AG04449 (cell line): ENCODE measurements at regions of chr4 and their contacts with region 1.

Region 1: DNA sequence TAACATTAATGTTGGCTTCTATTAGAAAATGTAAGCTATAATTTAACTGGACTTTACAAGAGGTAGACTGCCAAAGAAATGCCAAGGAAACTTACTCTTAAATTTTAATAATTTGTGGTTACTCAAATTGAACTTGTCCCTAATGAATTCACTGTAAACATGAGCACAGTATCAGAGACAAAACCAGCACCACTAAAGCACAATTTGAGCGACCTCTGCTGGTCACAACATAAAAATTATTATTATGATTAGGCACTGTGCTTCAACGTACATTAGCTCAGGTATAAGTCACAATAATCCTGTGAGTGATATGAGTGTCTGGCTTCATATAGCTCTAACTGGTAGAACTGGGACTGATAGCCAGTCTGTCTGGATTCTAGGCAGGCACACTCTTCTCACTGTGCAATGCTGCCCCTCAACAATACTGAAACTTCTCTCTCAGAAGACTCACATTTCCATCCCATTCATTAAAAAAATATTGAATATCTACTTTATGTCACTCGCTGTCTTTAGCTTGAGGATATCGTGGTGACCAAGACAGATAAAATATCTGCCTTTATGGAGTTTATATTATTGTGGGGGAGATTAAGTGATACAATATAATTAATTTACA is 8.0 kb downstream of the NUDT6 start:
- DNase-seq: no peak
- H3K4me3 ChIP-seq: no peak overlapping the region
- CTCF ChIP-seq: peak; percentile 26

Region 2: GRCh38 chr4:122602277-122603142 is 311.9 kb before region 1 on chr4:
- CTCF ChIA-PET with region 1: interaction called, 42 read pairs
- POLR2A ChIA-PET with region 1: no interaction called
- DNase-seq: no peak
- H3K4me3 ChIP-seq: no peak overlapping the region
- CTCF ChIP-seq: peak; percentile 20

Region 3: GRCh38 chr4:122732329-122733026 is 181.9 kb before region 1 on chr4 and contains the start of gene BBS12:
- CTCF ChIA-PET with region 1: interaction called, 43 read pairs
- POLR2A ChIA-PET with region 1: no interaction called
- DNase-seq: peak; percentile 95
- H3K4me3 ChIP-seq: peak within 1 kb of the TSS; percentile 82
- CTCF ChIP-seq: peak; percentile 74

Region 4: GRCh38 chr4:122758033-122758432 is 156.4 kb before region 1 on chr4:
- CTCF ChIA-PET with region 1: interaction called, 114 read pairs
- POLR2A ChIA-PET with region 1: no interaction called
- DNase-seq: no peak
- H3K4me3 ChIP-seq: no peak overlapping the region
- CTCF ChIP-seq: peak; percentile 20

Region 5: DNA sequence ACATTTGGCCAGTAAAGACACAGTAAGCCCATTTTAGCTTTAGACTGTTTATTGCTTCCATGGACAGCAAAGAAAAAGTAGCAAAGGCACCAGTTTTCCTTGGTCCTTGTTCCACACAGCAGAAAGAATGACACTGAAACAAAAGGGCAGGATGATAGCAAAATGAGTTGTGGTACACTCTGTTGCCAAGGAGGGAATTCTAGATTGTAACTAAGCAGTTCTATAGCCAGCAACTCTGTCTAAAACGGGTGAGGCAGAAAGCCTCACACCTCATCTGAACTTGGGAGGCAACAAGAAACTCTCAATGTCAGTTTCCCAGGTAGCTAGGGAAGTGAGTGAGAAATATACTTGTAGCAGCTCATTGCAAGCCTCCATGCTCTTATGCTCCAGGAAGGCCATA is 142.7 kb before region 1 on chr4:
- CTCF ChIA-PET with region 1: interaction called, 11 read pairs
- POLR2A ChIA-PET with region 1: no interaction called
- DNase-seq: no peak
- H3K4me3 ChIP-seq: no peak overlapping the region
- CTCF ChIP-seq: no peak

Region 6: DNA sequence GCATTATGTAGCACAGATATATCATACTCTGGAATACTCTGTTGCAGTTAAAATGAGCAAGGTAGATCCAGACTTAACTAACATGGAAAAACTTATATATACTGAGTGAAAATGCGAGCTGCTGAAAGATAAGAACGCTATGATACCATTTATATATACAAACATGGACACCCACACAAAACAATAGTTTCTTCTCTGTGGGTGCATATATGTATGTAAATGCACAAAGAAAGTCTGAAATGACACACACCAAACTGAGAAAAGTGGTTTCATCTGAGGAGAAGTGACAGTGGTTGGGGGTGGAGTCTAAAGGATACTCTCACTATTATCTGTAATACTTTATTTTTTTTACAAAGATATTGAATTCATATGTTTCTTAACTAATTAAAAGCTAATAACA is 100.0 kb before region 1 on chr4:
- CTCF ChIA-PET with region 1: no interaction called
- POLR2A ChIA-PET with region 1: no interaction called
- DNase-seq: no peak
- H3K4me3 ChIP-seq: no peak overlapping the region
- CTCF ChIP-seq: no peak

Region 7: DNA sequence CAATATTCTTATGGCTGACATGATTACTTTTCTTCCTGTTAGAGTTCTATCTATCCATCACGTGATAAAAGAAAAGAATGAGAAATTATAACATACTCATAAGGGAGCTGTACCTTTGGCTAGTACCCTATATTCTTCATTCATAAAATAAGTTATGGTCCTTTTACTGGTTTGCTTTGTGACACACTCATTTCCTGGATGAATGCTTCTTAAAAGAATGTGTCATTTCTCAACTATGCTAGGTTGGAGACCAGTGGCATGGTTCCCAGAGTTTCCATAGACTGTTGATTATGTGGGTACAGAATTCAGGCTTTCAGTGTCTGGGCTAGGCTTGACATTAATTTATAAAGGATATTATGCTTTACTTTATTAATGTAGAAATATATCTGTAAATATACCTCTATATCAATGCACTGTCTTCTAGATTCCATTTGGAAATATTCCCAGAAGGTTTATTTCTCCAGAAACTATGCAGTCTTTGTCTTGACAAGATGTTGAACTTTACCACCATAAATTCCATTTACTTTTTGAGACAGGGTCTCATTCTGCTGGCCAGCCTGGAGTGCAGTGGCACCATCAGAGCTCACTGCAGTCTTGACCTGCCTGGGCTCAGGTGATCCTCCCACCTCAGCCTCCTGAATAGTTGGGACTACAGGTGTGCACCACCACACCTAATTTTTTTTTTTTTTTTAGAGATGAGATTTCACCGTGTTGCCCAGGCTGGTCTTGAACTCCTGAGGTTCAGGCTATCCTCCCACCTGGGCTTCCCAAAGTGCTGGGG is 15.8 kb before region 1 on chr4:
- CTCF ChIA-PET with region 1: interaction called, 43 read pairs
- POLR2A ChIA-PET with region 1: no interaction called
- DNase-seq: peak; percentile 69
- H3K4me3 ChIP-seq: no peak overlapping the region
- CTCF ChIP-seq: no peak